Dorsolateral prefrontal cortex (tissue), 120 donors: ENCODE measurements at regions of chr1 and their contacts with region 1.

Region 1: DNA sequence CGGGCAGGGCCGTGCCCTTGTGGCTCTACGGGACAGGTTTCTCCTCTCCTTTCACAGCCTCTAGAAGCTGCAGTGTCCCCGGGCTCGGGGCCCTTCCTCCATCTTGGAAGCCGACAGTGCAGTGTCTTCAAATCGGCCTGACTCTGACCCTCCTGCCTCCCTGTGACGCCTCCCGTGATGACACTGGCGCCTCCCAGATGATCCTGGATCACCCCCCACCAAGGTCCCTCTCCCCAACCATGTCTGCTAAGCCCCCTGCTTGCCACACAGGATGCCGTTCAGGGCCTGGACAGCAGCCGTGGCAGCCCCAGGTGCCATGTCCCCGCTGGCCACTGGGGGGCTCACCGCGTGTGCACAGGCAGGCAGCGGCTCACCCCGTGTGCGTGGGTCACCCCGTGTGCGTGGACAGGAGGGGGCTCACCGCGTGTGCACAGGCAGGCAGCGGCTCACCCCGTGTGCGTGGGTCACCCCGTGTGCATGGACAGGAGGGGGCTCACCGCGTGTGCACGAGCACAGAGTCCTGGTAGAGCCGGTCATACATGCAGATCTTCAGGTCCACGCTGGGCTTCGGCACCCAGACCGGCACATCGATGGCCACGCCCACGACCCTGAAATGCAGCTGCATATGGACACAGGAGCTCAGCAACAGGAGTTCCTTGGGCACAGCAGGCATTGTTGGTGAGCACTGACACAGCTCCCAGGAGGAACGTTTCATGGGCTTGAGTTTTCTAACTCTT is 24.9 kb upstream of the TMEM52 start:
- DNase-seq: peak in 9 of 10 donors; percentile 37 to 80 (median 57)
- H3K4me3 ChIP-seq: peak overlapping the region in 37 of 59 donors; percentile 1 to 54 (median 33)
- H3K27ac ChIP-seq: peak overlapping the region in 1 of 59 donors; percentile 9
- H3K27me3 ChIP-seq: no peaks in the 10 kb centered on the region
- CTCF ChIP-seq: peak; percentile 51 to 94 (median 84)

Region 2: DNA sequence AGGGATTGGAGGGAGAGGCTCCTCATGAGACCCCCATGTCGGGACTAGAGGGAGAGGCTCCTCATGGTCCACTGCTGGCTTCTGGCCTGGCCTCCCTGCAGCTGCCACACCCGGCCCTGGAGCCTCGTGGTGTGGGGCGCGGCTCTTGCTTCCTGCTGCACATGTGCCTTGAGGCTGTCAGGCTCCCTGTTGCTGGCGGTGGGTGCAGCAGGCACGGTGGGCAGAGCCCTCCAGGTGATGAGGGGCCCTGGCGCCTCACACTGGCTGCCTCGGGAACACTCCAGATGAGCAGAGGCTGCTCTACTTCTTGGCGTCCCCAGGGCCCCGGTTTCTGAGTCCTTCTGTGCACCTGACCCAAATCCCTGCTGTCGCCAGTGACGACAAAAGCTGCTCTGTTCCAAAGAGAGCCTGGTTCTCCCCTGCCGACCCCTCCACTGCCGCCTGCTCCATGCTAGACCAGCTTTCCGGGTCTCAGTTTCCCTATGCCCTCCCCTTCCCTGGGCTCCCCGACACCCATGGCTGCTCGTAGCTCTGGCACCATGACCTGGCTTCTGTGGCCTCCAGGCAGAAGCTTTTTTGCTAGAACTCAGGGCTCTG is 482.2 kb before region 1 on chr1:
- intact Hi-C with region 1: no loop called
- DNase-seq: no peak
- H3K4me3 ChIP-seq: no peak overlapping the region
- H3K27ac ChIP-seq: no peak overlapping the region
- H3K27me3 ChIP-seq: no peaks in the 10 kb centered on the region
- CTCF ChIP-seq: no peak

Region 3: GRCh38 chr1:2009101-2010053 is 65.4 kb after region 1 on chr1:
- intact Hi-C with region 1: no loop called
- DNase-seq: peak in 1 of 10 donors; percentile 81
- H3K4me3 ChIP-seq: no peak overlapping the region
- H3K27ac ChIP-seq: peak overlapping the region in 1 of 59 donors; percentile 87
- H3K27me3 ChIP-seq: peaks cover 0 to 9% (median 0%) of the 10 kb centered on the region in 45 donors
- CTCF ChIP-seq: no peak

Region 4: GRCh38 chr1:2044510-2045319 is 100.7 kb after region 1 on chr1:
- intact Hi-C with region 1: loop called (anchors 5 kb)
- DNase-seq: peak in 9 of 10 donors; percentile 40 to 89 (median 63)
- H3K4me3 ChIP-seq: peak overlapping the region in 57 of 59 donors; percentile 14 to 61 (median 45)
- H3K27ac ChIP-seq: peak overlapping the region in 20 of 59 donors; percentile 11 to 77 (median 56)
- H3K27me3 ChIP-seq: peaks cover 0 to 27% (median 16%) of the 10 kb centered on the region in 45 donors
- CTCF ChIP-seq: peak in 55 of 56 donors; percentile 56 to 97 (median 83)